Naive thymus-derived CD4-positive, alpha-beta T cell (primary cell): ENCODE measurements at regions of chr1 and their contacts with region 1.

Region 1: GRCh38 chr1:9004700-9005394 is 21.4 kb downstream of the SLC2A7 start:
- DNase-seq: peak; percentile 63 to 89 (median 75)
- ATAC-seq: peak; percentile 96
- H3K4me3 ChIP-seq: no peak overlapping the region
- H3K4me3 Mint-ChIP-seq: peak overlapping the region in 8 of 10 donors; percentile 12 to 68 (median 49)
- H3K27ac ChIP-seq: peak overlapping the region; percentile 18
- H3K27ac Mint-ChIP-seq: peak overlapping the region in 4 of 9 donors; percentile 6 to 79 (median 32)
- H3K4me1 ChIP-seq: peaks cover 3 to 8% of the 10 kb centered on the region in 2 donors
- H3K4me1 Mint-ChIP-seq: peaks cover 0 to 12% (median 6%) of the 10 kb centered on the region in 7 donors
- H3K27me3 ChIP-seq: no peaks in the 10 kb centered on the region
- H3K27me3 Mint-ChIP-seq: no peaks in the 10 kb centered on the region

Region 2: DNA sequence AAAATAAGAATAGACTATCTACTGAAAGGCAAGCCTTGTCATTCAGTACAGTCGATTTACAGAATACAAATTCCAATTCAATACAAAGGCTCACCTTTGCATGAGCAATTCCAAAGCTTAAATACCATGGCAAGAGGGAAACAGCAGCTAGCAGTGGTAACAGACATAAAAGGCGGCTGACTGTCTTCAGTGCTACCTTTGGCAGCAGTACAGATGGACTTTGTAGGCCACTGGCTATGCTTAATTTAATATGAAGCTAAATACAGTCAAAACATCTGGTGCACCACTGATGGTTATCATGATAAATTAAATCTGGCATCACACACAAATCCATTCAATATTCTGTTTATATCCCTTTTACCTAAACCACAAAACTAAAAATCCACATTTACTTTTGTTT is 249.9 kb before region 1 on chr1:
- CTCF ChIA-PET with region 1: no interaction called
- POLR2A ChIA-PET with region 1: no interaction called
- intact Hi-C with region 1: no loop called
- DNase-seq: no peak
- ATAC-seq: no peak
- H3K4me3 ChIP-seq: no peak overlapping the region
- H3K4me3 Mint-ChIP-seq: no peak overlapping the region
- H3K27ac ChIP-seq: no peak overlapping the region
- H3K27ac Mint-ChIP-seq: no peak overlapping the region
- H3K4me1 ChIP-seq: no peaks in the 10 kb centered on the region
- H3K4me1 Mint-ChIP-seq: peaks cover 10 to 58% (median 34%) of the 10 kb centered on the region in 7 donors
- H3K27me3 ChIP-seq: no peaks in the 10 kb centered on the region
- H3K27me3 Mint-ChIP-seq: no peaks in the 10 kb centered on the region

Region 3: GRCh38 chr1:8848663-8849386 is 156.0 kb before region 1 on chr1:
- CTCF ChIA-PET with region 1: interaction called, 10 read pairs
- POLR2A ChIA-PET with region 1: no interaction called
- intact Hi-C with region 1: no loop called
- DNase-seq: peak; percentile 37 to 81 (median 69)
- ATAC-seq: peak; percentile 93
- H3K4me3 ChIP-seq: no peak overlapping the region
- H3K4me3 Mint-ChIP-seq: no peak overlapping the region
- H3K27ac ChIP-seq: no peak overlapping the region
- H3K27ac Mint-ChIP-seq: no peak overlapping the region
- H3K4me1 ChIP-seq: peaks cover 0 to 3% of the 10 kb centered on the region in 2 donors
- H3K4me1 Mint-ChIP-seq: peaks cover 0 to 14% (median 5%) of the 10 kb centered on the region in 7 donors
- H3K27me3 ChIP-seq: no peaks in the 10 kb centered on the region
- H3K27me3 Mint-ChIP-seq: peaks cover 0 to 2% (median 0%) of the 10 kb centered on the region in 5 donors

Region 4: GRCh38 chr1:8866792-8867415 is 137.9 kb before region 1 on chr1:
- CTCF ChIA-PET with region 1: interaction called, 50 read pairs
- POLR2A ChIA-PET with region 1: no interaction called
- intact Hi-C with region 1: loop called (anchors 1 kb)
- DNase-seq: no peak
- ATAC-seq: no peak
- H3K4me3 ChIP-seq: no peak overlapping the region
- H3K4me3 Mint-ChIP-seq: peak overlapping the region in 1 of 10 donors; percentile 47
- H3K27ac ChIP-seq: no peak overlapping the region
- H3K27ac Mint-ChIP-seq: peak overlapping the region in 3 of 9 donors; percentile 47 to 79 (median 65)
- H3K4me1 ChIP-seq: peaks cover 0 to 5% of the 10 kb centered on the region in 2 donors
- H3K4me1 Mint-ChIP-seq: peaks cover 6 to 71% (median 19%) of the 10 kb centered on the region in 7 donors
- H3K27me3 ChIP-seq: no peaks in the 10 kb centered on the region
- H3K27me3 Mint-ChIP-seq: no peaks in the 10 kb centered on the region

Region 5: GRCh38 chr1:8903908-8904650 is 100.8 kb before region 1 on chr1:
- CTCF ChIA-PET with region 1: interaction called, 10 read pairs
- POLR2A ChIA-PET with region 1: no interaction called
- intact Hi-C with region 1: no loop called
- DNase-seq: no peak
- ATAC-seq: no peak
- H3K4me3 ChIP-seq: no peak overlapping the region
- H3K4me3 Mint-ChIP-seq: no peak overlapping the region
- H3K27ac ChIP-seq: no peak overlapping the region
- H3K27ac Mint-ChIP-seq: peak overlapping the region in 4 of 9 donors; percentile 28 to 46 (median 36)
- H3K4me1 ChIP-seq: peaks cover 5 to 17% of the 10 kb centered on the region in 2 donors
- H3K4me1 Mint-ChIP-seq: peaks cover 13 to 55% (median 23%) of the 10 kb centered on the region in 7 donors
- H3K27me3 ChIP-seq: no peaks in the 10 kb centered on the region
- H3K27me3 Mint-ChIP-seq: no peaks in the 10 kb centered on the region

Region 6: DNA sequence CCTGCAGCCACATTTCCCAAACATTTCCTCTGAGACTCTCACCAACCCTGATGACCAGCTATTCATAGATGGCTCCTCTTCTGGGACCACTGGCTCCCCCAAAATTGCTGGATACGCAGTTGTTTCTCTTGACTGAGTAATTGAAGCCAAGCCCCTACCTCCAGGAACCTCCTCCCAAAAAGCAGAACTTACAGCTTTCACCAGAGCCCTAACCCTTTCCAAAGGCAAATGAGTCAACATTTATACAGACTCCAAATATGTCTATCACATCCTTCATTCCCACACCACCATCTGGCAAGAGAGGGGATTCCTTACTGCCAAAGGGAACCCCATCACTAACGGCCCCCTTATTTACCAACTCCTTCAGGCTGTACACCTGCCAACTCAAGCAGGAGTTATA is 79.4 kb before region 1 on chr1:
- CTCF ChIA-PET with region 1: interaction called, 110 read pairs
- POLR2A ChIA-PET with region 1: interaction called, 30 read pairs
- intact Hi-C with region 1: no loop called
- DNase-seq: no peak
- ATAC-seq: no peak
- H3K4me3 ChIP-seq: peak overlapping the region; percentile 56
- H3K4me3 Mint-ChIP-seq: no peak overlapping the region
- H3K27ac ChIP-seq: peak overlapping the region; percentile 69
- H3K27ac Mint-ChIP-seq: no peak overlapping the region
- H3K4me1 ChIP-seq: peaks cover 0 to 64% of the 10 kb centered on the region in 2 donors
- H3K4me1 Mint-ChIP-seq: peaks cover 16 to 36% (median 24%) of the 10 kb centered on the region in 7 donors
- H3K27me3 ChIP-seq: no peaks in the 10 kb centered on the region
- H3K27me3 Mint-ChIP-seq: no peaks in the 10 kb centered on the region

Region 7: GRCh38 chr1:8987881-8988617 is 16.8 kb before region 1 on chr1:
- CTCF ChIA-PET with region 1: interaction called, 67 read pairs
- POLR2A ChIA-PET with region 1: interaction called, 12 read pairs
- intact Hi-C with region 1: loop called (anchors 1 kb)
- DNase-seq: peak; percentile 19 to 78 (median 65)
- ATAC-seq: peak; percentile 89
- H3K4me3 ChIP-seq: no peak overlapping the region
- H3K4me3 Mint-ChIP-seq: peak overlapping the region; percentile 36 to 85 (median 73)
- H3K27ac ChIP-seq: peak overlapping the region; percentile 65
- H3K27ac Mint-ChIP-seq: peak overlapping the region; percentile 57 to 99 (median 93)
- H3K4me1 ChIP-seq: peaks cover 4 to 22% of the 10 kb centered on the region in 2 donors
- H3K4me1 Mint-ChIP-seq: peaks cover 9 to 63% (median 41%) of the 10 kb centered on the region in 7 donors
- H3K27me3 ChIP-seq: no peaks in the 10 kb centered on the region
- H3K27me3 Mint-ChIP-seq: no peaks in the 10 kb centered on the region

Region 8: GRCh38 chr1:9110669-9111356 is 106.0 kb after region 1 on chr1:
- CTCF ChIA-PET with region 1: no interaction called
- POLR2A ChIA-PET with region 1: no interaction called
- intact Hi-C with region 1: no loop called
- DNase-seq: peak; percentile 63 to 88 (median 79)
- ATAC-seq: peak; percentile 94
- H3K4me3 ChIP-seq: no peak overlapping the region
- H3K4me3 Mint-ChIP-seq: no peak overlapping the region
- H3K27ac ChIP-seq: no peak overlapping the region
- H3K27ac Mint-ChIP-seq: no peak overlapping the region
- H3K4me1 ChIP-seq: no peaks in the 10 kb centered on the region
- H3K4me1 Mint-ChIP-seq: peaks cover 0 to 27% (median 6%) of the 10 kb centered on the region in 7 donors
- H3K27me3 ChIP-seq: no peaks in the 10 kb centered on the region
- H3K27me3 Mint-ChIP-seq: no peaks in the 10 kb centered on the region

Region 9: GRCh38 chr1:9196129-9197040 is 191.5 kb after region 1 on chr1:
- CTCF ChIA-PET with region 1: interaction called, 5 read pairs
- POLR2A ChIA-PET with region 1: no interaction called
- intact Hi-C with region 1: loop called in 1 of 2 experiments (anchors 5 kb)
- DNase-seq: peak in 8 of 9 donors; percentile 33 to 67 (median 50)
- ATAC-seq: peak; percentile 75
- H3K4me3 ChIP-seq: no peak overlapping the region
- H3K4me3 Mint-ChIP-seq: no peak overlapping the region
- H3K27ac ChIP-seq: no peak overlapping the region
- H3K27ac Mint-ChIP-seq: no peak overlapping the region
- H3K4me1 ChIP-seq: peaks cover 0 to 3% of the 10 kb centered on the region in 2 donors
- H3K4me1 Mint-ChIP-seq: peaks cover 11 to 20% (median 19%) of the 10 kb centered on the region in 7 donors
- H3K27me3 ChIP-seq: peaks cover 3 to 10% of the 10 kb centered on the region in 2 donors
- H3K27me3 Mint-ChIP-seq: peaks cover 46 to 74% (median 57%) of the 10 kb centered on the region in 5 donors

Region 10: DNA sequence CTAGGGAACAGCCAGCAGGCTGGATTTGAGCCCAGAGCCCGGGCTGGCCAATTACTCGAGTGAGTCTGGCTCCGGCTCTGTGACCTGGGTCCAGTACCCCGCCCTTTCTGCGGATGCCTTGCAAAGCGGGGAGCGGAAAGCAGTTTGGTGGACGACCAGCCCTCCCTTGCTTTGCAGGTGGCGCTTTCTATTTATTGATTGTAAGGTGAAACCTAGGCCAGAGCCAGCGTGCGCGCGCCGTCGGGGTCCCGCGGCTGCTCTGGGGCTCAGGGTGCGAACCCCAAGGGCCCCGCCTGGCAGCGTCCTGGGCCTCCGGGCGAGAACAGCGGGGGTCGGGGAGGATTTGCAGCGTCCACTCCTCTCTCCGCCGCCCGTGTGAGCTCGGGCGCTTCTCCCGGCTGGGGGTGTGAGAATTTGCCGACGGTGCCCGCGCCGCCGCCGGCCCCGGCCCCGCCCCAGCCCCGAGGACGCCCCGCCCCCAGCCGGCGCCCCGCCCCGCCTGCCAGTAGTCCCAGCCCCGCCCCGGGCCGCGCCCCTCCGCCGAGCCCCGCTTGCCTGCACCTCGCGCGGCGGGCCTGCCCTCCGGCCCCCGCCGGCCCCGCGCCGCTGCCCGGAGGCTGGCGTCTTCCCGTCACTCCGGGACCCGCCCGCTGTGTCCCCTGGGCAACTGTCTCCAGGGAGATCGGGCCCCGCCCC is 684.3 kb after region 1 on chr1:
- CTCF ChIA-PET with region 1: no interaction called
- POLR2A ChIA-PET with region 1: no interaction called
- intact Hi-C with region 1: no loop called
- DNase-seq: peak; percentile 62 to 89 (median 82)
- ATAC-seq: peak; percentile 93
- H3K4me3 ChIP-seq: peak overlapping the region; percentile 50
- H3K4me3 Mint-ChIP-seq: peak overlapping the region; percentile 80 to 90 (median 87)
- H3K27ac ChIP-seq: peak overlapping the region; percentile 70
- H3K27ac Mint-ChIP-seq: peak overlapping the region in 8 of 9 donors; percentile 59 to 90 (median 78)
- H3K4me1 ChIP-seq: peaks cover 53 to 59% of the 10 kb centered on the region in 2 donors
- H3K4me1 Mint-ChIP-seq: peaks cover 36 to 85% (median 73%) of the 10 kb centered on the region in 7 donors
- H3K27me3 ChIP-seq: no peaks in the 10 kb centered on the region
- H3K27me3 Mint-ChIP-seq: no peaks in the 10 kb centered on the region